Caco-2 (cell line): ENCODE measurements at regions of chr22 and their contacts with region 1.

Region 1: DNA sequence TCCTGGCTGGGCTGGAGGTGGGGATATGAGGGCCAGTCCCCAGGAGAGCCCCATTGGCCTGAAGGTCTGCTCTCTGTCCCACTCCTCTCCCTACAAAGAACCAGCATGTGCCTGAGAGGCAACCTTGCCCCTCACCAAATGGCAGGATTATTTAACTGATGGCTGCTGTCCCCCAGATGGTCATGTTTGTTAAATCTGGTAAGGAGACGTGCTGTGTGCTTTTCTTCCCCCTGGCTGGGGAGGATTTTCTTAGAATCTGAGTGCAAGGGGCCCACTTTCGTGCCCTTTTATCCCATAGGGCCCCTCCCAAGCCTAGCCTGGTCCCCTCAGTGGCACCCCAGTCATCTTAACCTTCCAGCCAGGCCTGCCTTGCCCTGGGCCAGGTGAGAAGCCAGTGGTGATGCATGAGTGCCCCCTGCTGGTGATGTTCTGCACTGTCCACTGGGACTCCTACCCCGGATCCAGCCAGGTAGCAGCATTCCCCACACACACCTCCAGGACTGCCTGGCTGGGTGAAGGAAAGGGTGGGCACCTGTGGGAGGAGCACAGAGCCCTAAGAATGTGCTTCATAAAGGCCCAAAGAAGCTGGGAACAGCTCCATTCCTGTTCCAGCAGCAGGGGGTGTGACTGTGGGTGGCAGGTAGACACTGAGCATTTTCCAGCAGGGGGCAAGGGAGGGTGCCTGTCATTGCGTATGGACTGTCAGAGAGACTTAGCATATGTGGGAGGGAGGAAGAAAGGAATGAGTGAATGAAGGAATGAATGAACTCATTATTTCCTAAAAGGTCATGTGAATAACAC is 28.9 kb downstream of the MFNG start:
- DNase-seq: peak; percentile 84 to 92
- H3K4me3 ChIP-seq: no peak overlapping the region
- H3K4me3 Mint-ChIP-seq: no peak overlapping the region
- H3K27ac Mint-ChIP-seq: peak overlapping the region; percentile 94
- H3K4me1 ChIP-seq: peaks cover 35% of the 10 kb centered on the region
- H3K4me1 Mint-ChIP-seq: peaks cover 40% of the 10 kb centered on the region
- H3K27me3 ChIP-seq: no peaks in the 10 kb centered on the region
- H3K27me3 Mint-ChIP-seq: no peaks in the 10 kb centered on the region
- CTCF ChIP-seq: peak; percentile 92 to 98

Region 2: GRCh38 chr22:37077884-37078485 is 379.3 kb before region 1 on chr22:
- CTCF ChIA-PET with region 1: no interaction called
- POLR2A ChIA-PET with region 1: no interaction called
- intact Hi-C with region 1: loop called (anchors 10 kb)
- DNase-seq: peak; percentile 61 to 84
- H3K4me3 ChIP-seq: no peak overlapping the region
- H3K4me3 Mint-ChIP-seq: no peak overlapping the region
- H3K27ac Mint-ChIP-seq: no peak overlapping the region
- H3K4me1 ChIP-seq: no peaks in the 10 kb centered on the region
- H3K4me1 Mint-ChIP-seq: no peaks in the 10 kb centered on the region
- H3K27me3 ChIP-seq: peaks cover 2% of the 10 kb centered on the region; the same call in 1 of the 2 replicates
- H3K27me3 Mint-ChIP-seq: peaks cover 16% of the 10 kb centered on the region
- CTCF ChIP-seq: peak; percentile 93 to 97

Region 3: DNA sequence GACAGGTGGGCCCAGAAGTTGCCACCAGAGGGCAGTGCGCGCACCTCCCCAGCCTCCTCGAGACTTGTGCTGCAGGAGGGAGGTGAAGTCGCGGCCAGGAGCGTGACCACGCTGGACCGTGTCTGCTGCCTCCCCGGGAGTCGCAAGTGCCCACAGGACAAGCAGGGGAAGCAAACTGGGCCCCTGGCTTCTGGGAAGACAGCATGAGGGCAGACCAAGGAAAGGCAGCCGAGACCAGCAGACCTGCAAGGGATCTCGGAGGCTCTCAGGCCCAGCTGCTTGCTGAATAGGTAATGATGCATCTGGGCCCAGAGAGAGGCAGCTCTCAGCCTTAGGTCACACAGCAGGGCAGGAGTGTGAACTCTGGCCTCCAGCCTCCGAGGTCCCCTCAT is 290.6 kb before region 1 on chr22:
- CTCF ChIA-PET with region 1: no interaction called
- POLR2A ChIA-PET with region 1: no interaction called
- intact Hi-C with region 1: loop called (anchors 1 kb)
- DNase-seq: peak; percentile 79 to 80
- H3K4me3 ChIP-seq: no peak overlapping the region
- H3K4me3 Mint-ChIP-seq: no peak overlapping the region
- H3K27ac Mint-ChIP-seq: no peak overlapping the region
- H3K4me1 ChIP-seq: peaks cover 6% of the 10 kb centered on the region; the same call in 1 of the 2 replicates
- H3K4me1 Mint-ChIP-seq: no peaks in the 10 kb centered on the region
- H3K27me3 ChIP-seq: no peaks in the 10 kb centered on the region
- H3K27me3 Mint-ChIP-seq: no peaks in the 10 kb centered on the region
- CTCF ChIP-seq: peak; percentile 75 to 86

Region 4: DNA sequence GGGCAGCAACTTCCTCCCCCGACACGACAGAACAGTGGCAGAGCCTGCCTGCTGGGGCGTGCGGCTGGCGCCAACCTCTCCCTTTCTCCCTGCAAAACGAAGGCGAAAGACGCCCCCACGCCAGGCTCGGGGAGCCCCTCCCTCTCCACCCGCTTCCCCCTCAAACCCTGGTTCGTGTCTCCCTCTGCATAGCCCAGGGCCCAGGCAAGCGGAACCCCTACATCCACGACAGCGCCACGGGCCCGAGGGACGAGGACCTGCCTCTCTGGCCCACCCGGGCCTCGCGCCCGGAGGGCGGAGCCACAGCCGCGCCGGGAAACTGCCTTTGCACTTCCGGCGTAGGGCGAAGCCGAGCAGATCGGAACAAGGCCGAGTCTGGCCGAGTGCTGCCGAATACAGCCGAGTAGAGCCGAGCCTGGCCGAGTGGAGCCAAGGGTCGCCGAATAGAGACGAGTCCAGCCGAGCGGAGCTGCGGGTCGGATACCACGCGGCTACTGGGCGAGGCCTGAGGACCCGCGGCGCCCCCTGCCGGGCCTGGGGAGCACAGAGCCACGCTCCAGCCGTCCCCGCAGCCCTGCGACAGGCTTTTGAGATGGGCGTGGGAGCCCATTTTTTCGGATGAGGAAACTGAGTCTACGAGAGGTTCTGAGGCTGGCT is 258.1 kb before region 1 on chr22:
- CTCF ChIA-PET with region 1: no interaction called
- POLR2A ChIA-PET with region 1: no interaction called
- intact Hi-C with region 1: loop called (anchors 10 kb)
- DNase-seq: peak; percentile 97 to 99
- H3K4me3 ChIP-seq: peak overlapping the region; percentile 68
- H3K4me3 Mint-ChIP-seq: peak overlapping the region; percentile 90
- H3K27ac Mint-ChIP-seq: peak overlapping the region; percentile 59
- H3K4me1 ChIP-seq: peaks cover 48% of the 10 kb centered on the region
- H3K4me1 Mint-ChIP-seq: peaks cover 26% of the 10 kb centered on the region
- H3K27me3 ChIP-seq: no peaks in the 10 kb centered on the region; the same call in 1 of the 2 replicates
- H3K27me3 Mint-ChIP-seq: no peaks in the 10 kb centered on the region
- CTCF ChIP-seq: peak; percentile 89 to 95

Region 5: DNA sequence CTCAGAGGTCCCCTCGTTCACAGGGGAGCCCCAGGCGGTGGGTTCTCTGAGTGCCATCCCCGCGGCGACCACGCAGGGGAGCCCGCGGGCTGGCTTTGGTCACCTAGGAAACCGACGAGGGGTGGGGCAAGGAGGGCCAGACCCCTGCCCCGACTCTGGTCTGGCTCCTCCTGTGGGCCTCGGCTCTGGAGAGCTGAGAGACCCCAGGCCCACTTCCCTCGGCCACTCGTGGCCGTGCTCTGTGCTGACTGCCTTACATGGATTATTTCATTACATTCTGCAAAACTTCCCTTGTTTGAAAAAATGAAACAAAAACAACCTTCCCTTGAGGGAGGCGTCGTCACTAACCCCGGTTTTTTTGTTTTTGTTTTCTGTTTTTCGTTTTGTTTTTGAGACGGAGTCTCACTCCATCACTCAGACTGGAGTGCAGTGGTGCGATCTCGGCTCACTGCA is 190.1 kb before region 1 on chr22:
- CTCF ChIA-PET with region 1: no interaction called
- POLR2A ChIA-PET with region 1: no interaction called
- intact Hi-C with region 1: loop called (anchors 5 kb)
- DNase-seq: peak in 1 of 2 experiments; percentile 61
- H3K4me3 ChIP-seq: no peak overlapping the region
- H3K4me3 Mint-ChIP-seq: peak overlapping the region; percentile 59
- H3K27ac Mint-ChIP-seq: no peak overlapping the region
- H3K4me1 ChIP-seq: no peaks in the 10 kb centered on the region
- H3K4me1 Mint-ChIP-seq: no peaks in the 10 kb centered on the region
- H3K27me3 ChIP-seq: no peaks in the 10 kb centered on the region; the same call in 1 of the 2 replicates
- H3K27me3 Mint-ChIP-seq: peaks cover 10% of the 10 kb centered on the region
- CTCF ChIP-seq: peak; percentile 67 to 74

Region 6: DNA sequence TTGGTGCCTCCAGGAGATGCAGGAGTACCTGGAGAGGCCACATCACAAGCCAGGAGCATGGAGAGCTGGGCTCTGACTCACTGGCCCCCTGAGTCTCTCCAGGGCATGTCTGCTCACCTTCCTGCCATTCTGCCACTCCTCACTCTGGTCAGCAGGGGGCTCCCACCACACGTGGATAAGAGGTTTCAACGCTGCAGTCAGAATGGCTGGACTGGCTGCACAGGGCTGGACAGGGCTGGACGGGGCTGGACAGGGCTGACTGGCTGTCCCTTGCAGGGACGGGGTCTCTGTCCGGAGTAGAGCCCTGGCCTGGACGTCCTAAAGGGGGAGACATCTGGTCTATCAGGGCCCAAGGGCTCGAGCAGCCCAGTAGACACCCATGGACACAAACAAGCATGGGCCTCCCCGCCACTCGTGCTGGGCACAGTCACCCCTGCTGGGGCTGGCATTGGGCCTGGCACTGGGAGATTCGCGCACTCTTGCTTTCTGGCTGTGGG is 140.4 kb before region 1 on chr22:
- CTCF ChIA-PET with region 1: interaction called, 49 read pairs
- POLR2A ChIA-PET with region 1: no interaction called
- intact Hi-C with region 1: loop called (anchors 1 kb)
- DNase-seq: peak; percentile 87 to 88
- H3K4me3 ChIP-seq: no peak overlapping the region
- H3K4me3 Mint-ChIP-seq: no peak overlapping the region
- H3K27ac Mint-ChIP-seq: no peak overlapping the region
- H3K4me1 ChIP-seq: peaks cover 50% of the 10 kb centered on the region
- H3K4me1 Mint-ChIP-seq: peaks cover 39% of the 10 kb centered on the region
- H3K27me3 ChIP-seq: no peaks in the 10 kb centered on the region
- H3K27me3 Mint-ChIP-seq: no peaks in the 10 kb centered on the region
- CTCF ChIP-seq: peak; percentile 92 to 94

Region 7: GRCh38 chr22:37428649-37429586 is 28.4 kb before region 1 on chr22:
- CTCF ChIA-PET with region 1: interaction called, 4 read pairs
- POLR2A ChIA-PET with region 1: interaction called, 3 read pairs
- intact Hi-C with region 1: loop called (anchors 1 kb)
- DNase-seq: peak; percentile 62 to 74
- H3K4me3 ChIP-seq: no peak overlapping the region
- H3K4me3 Mint-ChIP-seq: peak overlapping the region; percentile 82
- H3K27ac Mint-ChIP-seq: no peak overlapping the region
- H3K4me1 ChIP-seq: peaks cover 33% of the 10 kb centered on the region
- H3K4me1 Mint-ChIP-seq: peaks cover 37% of the 10 kb centered on the region
- H3K27me3 ChIP-seq: no peaks in the 10 kb centered on the region
- H3K27me3 Mint-ChIP-seq: no peaks in the 10 kb centered on the region
- CTCF ChIP-seq: peak; percentile 82 to 84